ENCODE measurements at regions of chr19 and their contacts with region 1.

Region 1: GRCh38 chr19:54102421-54103169 is at the start of gene NDUFA3:
- DNase-seq: peak; percentile 95 to 98
- ATAC-seq: peak; percentile 99
- H3K4me3 ChIP-seq: peak within 1 kb of the TSS; percentile 78 to 94 (median 90)
- H3K27ac ChIP-seq: peak within 1 kb of the TSS; percentile 83 to 95 (median 89)
- H3K4me1 ChIP-seq: peaks cover 10% of the 10 kb centered on the region in 2 donors
- H3K27me3 ChIP-seq: peaks cover 0 to 7% (median 0%) of the 10 kb centered on the region in 3 donors
- CTCF ChIP-seq: no peak
- POLR2A ChIP-seq: peak; percentile 71 to 91
- total RNA-seq, gene NDUFA3: 29.5 to 84.9 (median 60.6) TPM

Region 2: GRCh38 chr19:53977429-53977990 is 125.1 kb before region 1 on chr19:
- in situ Hi-C with region 1: no loop called
- intact Hi-C with region 1: loop called (anchors 5 kb)
- DNase-seq: peak; percentile 76 to 77
- ATAC-seq: peak; percentile 69 to 81
- H3K4me3 ChIP-seq: peak overlapping the region; percentile 48 to 59 (median 53)
- H3K27ac ChIP-seq: peak overlapping the region; percentile 49 to 72 (median 68)
- H3K4me1 ChIP-seq: peaks cover 13 to 18% of the 10 kb centered on the region in 2 donors
- H3K27me3 ChIP-seq: peaks cover 0 to 19% (median 5%) of the 10 kb centered on the region in 3 donors
- CTCF ChIP-seq: no peak
- POLR2A ChIP-seq: no peak

Region 3: GRCh38 chr19:54115109-54116063 is 12.8 kb after region 1 on chr19 and contains the starts of genes PRPF31 and TFPT:
- in situ Hi-C with region 1: no loop called
- intact Hi-C with region 1: loop called (anchors 1 kb)
- DNase-seq: peak; percentile 94 to 95
- ATAC-seq: peak; percentile 95 to 97
- H3K4me3 ChIP-seq: peak within 1 kb of the TSS; percentile 69 to 98 (median 91)
- H3K27ac ChIP-seq: peak within 1 kb of the TSS; percentile 87 to 99 (median 90)
- H3K4me1 ChIP-seq: peaks cover 21% of the 10 kb centered on the region in 2 donors
- H3K27me3 ChIP-seq: no peaks in the 10 kb centered on the region
- CTCF ChIP-seq: peak in 1 of 5 experiments; percentile 24
- POLR2A ChIP-seq: peak; percentile 63 to 76
- total RNA-seq, gene PRPF31: 26.6 to 39.4 (median 37.2) TPM
- total RNA-seq, gene TFPT: 7.5 to 18.1 (median 17.5) TPM

Region 4: DNA sequence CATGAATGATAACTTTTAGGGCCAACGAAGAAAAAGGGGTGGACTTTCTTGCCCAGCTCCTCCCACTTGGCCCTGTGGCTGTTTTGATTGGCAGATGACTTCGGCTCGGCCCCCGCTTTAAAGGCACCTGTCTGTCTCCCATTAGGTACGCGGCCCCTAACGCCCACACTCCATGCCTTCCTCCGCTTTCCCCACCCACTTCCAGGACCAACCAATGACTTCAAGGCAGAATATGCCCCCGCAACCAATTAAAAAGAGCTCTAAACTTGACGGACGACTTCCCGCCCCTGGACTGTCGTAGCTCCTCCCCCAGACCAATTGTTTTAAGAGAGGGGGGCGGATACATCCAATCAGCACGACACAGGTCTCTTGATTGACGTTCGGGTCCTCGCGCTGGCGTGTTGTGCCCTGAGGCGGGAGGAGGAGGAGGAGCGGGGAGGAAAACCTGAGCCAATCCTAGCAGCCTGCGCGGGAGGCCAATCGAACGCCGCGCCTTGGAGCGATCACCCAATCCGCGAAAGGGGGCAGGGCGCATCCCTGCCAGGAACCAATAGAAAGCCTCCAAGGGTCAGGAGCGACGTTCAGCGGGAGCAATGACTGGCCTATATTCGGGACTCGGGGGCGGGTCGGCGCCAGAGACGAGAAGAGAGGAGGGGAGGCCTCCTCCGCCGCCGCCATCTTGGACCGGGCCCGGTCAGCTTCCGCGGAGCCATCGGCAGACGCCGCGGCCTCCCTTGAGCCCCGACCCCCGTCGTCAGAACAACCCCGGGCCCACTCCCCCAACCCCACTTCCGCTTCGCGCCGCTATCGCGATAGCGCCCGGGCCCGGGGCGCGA is 34.7 kb after region 1 on chr19 and contains the start of gene CNOT3:
- in situ Hi-C with region 1: no loop called
- intact Hi-C with region 1: loop called (anchors 2 kb)
- DNase-seq: peak; percentile 100
- ATAC-seq: peak; percentile 90 to 94
- H3K4me3 ChIP-seq: peak within 1 kb of the TSS; percentile 86 to 99 (median 92)
- H3K27ac ChIP-seq: peak within 1 kb of the TSS; percentile 97 to 100 (median 98)
- H3K4me1 ChIP-seq: peaks cover 29 to 44% of the 10 kb centered on the region in 2 donors
- H3K27me3 ChIP-seq: no peaks in the 10 kb centered on the region
- CTCF ChIP-seq: no peak
- POLR2A ChIP-seq: peak; percentile 94 to 98
- total RNA-seq, gene CNOT3: 5.1 to 14.0 (median 10.2) TPM

Region 5: DNA sequence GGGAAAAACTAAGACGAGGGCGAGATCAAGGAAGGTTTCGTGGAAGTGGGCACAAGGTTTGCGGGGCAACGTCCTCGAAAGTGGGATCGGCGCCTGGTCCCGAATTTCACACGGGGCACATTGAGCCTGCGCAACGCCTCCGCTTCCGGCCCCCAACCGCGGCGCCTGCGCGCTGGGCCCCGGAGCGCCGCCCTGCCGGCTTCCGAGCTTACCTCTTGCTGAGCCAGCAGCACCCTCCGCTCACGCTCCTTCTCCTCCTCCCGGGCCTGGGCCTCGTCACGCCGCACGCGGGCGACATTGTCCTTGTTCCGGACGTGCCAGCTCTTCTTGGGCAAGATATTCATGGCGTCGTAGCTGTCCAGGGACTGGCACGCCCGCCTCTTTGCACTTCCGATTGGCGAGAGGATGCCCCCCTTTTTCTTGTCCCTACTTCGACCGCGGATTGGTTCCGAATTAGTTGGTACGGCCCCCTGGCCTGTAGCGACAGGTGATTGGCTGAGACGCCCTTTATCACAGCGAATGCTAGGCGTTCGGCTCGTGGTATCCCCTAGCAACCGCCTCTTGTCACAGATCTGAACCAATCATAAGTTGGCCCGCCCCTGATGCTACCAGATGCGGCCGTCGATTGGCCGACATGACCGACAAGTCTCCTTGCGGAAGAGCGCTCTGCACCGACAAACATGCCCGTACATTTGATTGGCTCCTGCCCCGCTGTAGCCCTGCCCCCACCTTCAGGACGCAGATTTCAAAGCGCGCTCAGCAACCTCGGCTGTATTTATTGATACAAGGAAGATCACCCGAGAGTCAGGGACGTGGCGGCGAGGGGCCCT is 57.0 kb after region 1 on chr19 and contains the start of gene LENG1:
- in situ Hi-C with region 1: no loop called
- intact Hi-C with region 1: loop called (anchors 2 kb)
- DNase-seq: peak; percentile 100
- ATAC-seq: peak; percentile 96 to 98
- H3K4me3 ChIP-seq: peak within 1 kb of the TSS; percentile 78 to 87 (median 84)
- H3K27ac ChIP-seq: peak within 1 kb of the TSS; percentile 93 to 98 (median 96)
- H3K4me1 ChIP-seq: peaks cover 23 to 38% of the 10 kb centered on the region in 2 donors
- H3K27me3 ChIP-seq: peaks cover 3 to 8% (median 3%) of the 10 kb centered on the region in 3 donors
- CTCF ChIP-seq: peak in 4 of 5 experiments; percentile 31 to 43 (median 37)
- POLR2A ChIP-seq: peak; percentile 68 to 80
- total RNA-seq, gene LENG1: 6.5 to 14.2 (median 11.9) TPM

Region 6: DNA sequence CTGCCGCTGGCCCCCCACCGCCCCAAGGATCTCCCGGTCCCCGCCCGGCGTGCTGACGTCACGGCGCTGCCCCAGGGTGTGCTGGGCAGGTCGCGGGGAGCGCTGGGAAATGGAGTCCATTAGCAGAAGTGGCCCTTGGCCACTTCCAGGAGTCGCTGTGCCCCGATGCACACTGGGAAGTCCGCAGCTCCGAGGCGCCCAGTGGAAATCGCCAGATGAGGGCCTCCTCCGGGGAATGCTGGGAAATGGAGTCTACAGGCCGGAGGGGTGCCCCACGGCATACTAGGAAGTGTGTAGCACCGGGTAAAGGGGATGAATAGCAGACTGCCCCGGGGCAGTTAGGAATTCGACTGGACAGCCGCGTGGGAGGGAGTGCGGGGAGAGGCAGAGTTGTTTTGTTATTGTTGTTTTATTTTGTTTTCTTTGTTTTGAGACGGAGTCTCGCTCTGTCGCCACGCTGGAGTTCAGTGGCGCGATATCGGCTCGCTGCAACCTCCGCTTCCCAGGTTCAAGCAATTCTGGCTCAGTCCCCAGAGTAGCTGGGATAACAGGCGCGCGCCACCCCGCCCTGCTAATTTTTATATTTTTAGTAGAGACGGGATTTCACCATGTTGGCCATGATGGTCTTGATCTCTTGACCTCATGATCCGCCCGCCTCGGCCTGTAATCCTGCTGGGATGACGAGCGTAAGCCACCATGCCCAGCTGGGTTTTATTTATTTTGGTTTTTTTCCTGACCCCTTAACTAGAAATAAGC is 1015.2 kb after region 1 on chr19 and contains the start of gene PPP1R12C:
- in situ Hi-C with region 1: loop called in 1 of 4 experiments (anchors 25 kb)
- intact Hi-C with region 1: no loop called
- DNase-seq: peak; percentile 98
- ATAC-seq: peak; percentile 81 to 90
- H3K4me3 ChIP-seq: peak within 1 kb of the TSS; percentile 80 to 90 (median 85)
- H3K27ac ChIP-seq: peak within 1 kb of the TSS; percentile 74 to 88 (median 86)
- H3K4me1 ChIP-seq: peaks cover 35 to 44% of the 10 kb centered on the region in 2 donors
- H3K27me3 ChIP-seq: no peaks in the 10 kb centered on the region
- CTCF ChIP-seq: peak in 1 of 5 experiments; percentile 25
- POLR2A ChIP-seq: peak; percentile 29 to 36
- total RNA-seq, gene PPP1R12C: 22.6 to 28.2 (median 26.2) TPM

Measured in gastrocnemius medialis (tissue), 4 donors.